CD4-positive, alpha-beta memory T cell (primary cell): ENCODE measurements at regions of chr1 and their contacts with region 1.

Region 1: GRCh38 chr1:101309334-101310311 is 72.8 kb downstream of the S1PR1 start:
- DNase-seq: peak; percentile 86 to 92 (median 89)
- H3K4me3 ChIP-seq: peak overlapping the region; percentile 9 to 55
- H3K4me3 Mint-ChIP-seq: peak overlapping the region; percentile 80 to 88 (median 86)
- H3K27ac ChIP-seq: peak overlapping the region; percentile 79
- H3K27ac Mint-ChIP-seq: peak overlapping the region; percentile 97 to 99 (median 98)
- H3K4me1 ChIP-seq: peaks cover 56% of the 10 kb centered on the region
- H3K4me1 Mint-ChIP-seq: peaks cover 50 to 78% (median 63%) of the 10 kb centered on the region in 4 donors
- H3K27me3 ChIP-seq: no peaks in the 10 kb centered on the region
- H3K27me3 Mint-ChIP-seq: no peaks in the 10 kb centered on the region

Region 2: GRCh38 chr1:100921109-100921706 is 388.4 kb before region 1 on chr1:
- CTCF ChIA-PET with region 1: interaction called, 10 read pairs
- POLR2A ChIA-PET with region 1: interaction called, 19 read pairs
- intact Hi-C with region 1: no loop called
- DNase-seq: peak in 4 of 5 donors; percentile 48 to 66 (median 60)
- H3K4me3 ChIP-seq: no peak overlapping the region
- H3K4me3 Mint-ChIP-seq: peak overlapping the region in 3 of 8 donors; percentile 24 to 67 (median 39)
- H3K27ac ChIP-seq: no peak overlapping the region
- H3K27ac Mint-ChIP-seq: peak overlapping the region; percentile 61 to 91 (median 82)
- H3K4me1 ChIP-seq: peaks cover 39% of the 10 kb centered on the region
- H3K4me1 Mint-ChIP-seq: peaks cover 25 to 61% (median 38%) of the 10 kb centered on the region in 4 donors
- H3K27me3 ChIP-seq: no peaks in the 10 kb centered on the region
- H3K27me3 Mint-ChIP-seq: no peaks in the 10 kb centered on the region

Region 3: DNA sequence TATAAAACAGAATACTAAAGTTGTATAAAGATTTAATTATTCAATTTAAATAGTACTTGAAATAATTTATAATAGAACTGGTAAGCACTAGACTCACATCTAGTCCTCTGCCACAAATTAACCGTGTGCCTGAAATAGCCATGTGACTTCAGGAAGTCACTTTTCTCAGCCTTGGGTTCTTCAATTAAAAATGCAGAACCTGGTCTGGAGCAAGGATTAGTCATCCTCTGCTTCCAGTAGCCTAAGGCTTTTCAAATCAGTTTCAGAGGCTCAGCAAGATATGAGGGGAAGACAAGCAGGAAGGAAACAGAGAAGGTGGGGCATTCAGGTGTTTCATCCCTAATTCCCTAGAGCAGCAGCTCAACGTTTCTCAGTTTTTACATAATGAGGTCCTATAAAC is 307.1 kb before region 1 on chr1:
- CTCF ChIA-PET with region 1: no interaction called
- POLR2A ChIA-PET with region 1: no interaction called
- intact Hi-C with region 1: no loop called
- DNase-seq: no peak
- H3K4me3 ChIP-seq: no peak overlapping the region
- H3K4me3 Mint-ChIP-seq: peak overlapping the region in 3 of 8 donors; percentile 10 to 71 (median 54)
- H3K27ac ChIP-seq: no peak overlapping the region
- H3K27ac Mint-ChIP-seq: peak overlapping the region; percentile 44 to 90 (median 76)
- H3K4me1 ChIP-seq: peaks cover 58% of the 10 kb centered on the region
- H3K4me1 Mint-ChIP-seq: peaks cover 46 to 64% (median 50%) of the 10 kb centered on the region in 4 donors
- H3K27me3 ChIP-seq: no peaks in the 10 kb centered on the region
- H3K27me3 Mint-ChIP-seq: no peaks in the 10 kb centered on the region

Region 4: GRCh38 chr1:101198842-101199636 is 110.6 kb before region 1 on chr1:
- CTCF ChIA-PET with region 1: no interaction called
- POLR2A ChIA-PET with region 1: no interaction called
- intact Hi-C with region 1: no loop called
- DNase-seq: no peak
- H3K4me3 ChIP-seq: no peak overlapping the region
- H3K4me3 Mint-ChIP-seq: no peak overlapping the region
- H3K27ac ChIP-seq: no peak overlapping the region
- H3K27ac Mint-ChIP-seq: no peak overlapping the region
- H3K4me1 ChIP-seq: no peaks in the 10 kb centered on the region
- H3K4me1 Mint-ChIP-seq: peaks cover 0 to 9% (median 6%) of the 10 kb centered on the region in 4 donors
- H3K27me3 ChIP-seq: no peaks in the 10 kb centered on the region
- H3K27me3 Mint-ChIP-seq: peaks cover 0 to 3% of the 10 kb centered on the region in 2 donors

Region 5: DNA sequence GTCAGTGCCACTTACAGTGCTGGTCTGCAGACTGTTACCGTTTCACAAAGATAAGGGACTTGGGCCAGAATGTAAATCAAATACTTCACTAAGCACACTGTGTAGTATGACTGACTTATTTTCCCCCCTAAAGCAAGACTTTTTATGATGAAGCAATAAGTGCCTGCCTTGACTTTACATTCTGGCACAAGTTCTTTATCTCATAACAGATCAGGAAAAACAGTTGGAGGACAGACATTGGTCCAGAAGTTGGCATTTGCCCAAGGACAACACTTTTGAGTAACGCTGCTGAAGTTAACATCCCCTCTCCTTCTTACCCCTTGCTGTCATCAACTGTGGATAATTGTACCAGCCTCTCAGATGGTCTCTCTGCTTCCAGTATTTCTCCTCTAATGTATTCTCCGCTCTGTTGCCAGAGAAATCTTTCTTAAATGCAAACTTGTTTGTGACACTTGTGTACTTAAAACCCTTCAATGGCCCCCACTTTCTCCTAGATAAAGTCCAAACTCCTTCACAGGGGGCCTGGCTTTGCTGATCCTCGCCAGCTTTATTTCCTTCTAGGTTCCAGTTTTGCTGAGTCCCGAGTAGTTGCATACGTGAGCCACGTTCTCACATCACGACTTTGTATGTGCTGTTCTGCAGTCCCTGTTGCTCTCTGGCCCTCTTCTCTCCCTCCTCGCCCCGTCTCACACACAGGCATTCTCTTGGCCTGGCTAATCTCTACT is 27.1 kb before region 1 on chr1:
- CTCF ChIA-PET with region 1: interaction called, 180 read pairs
- POLR2A ChIA-PET with region 1: interaction called, 21 read pairs
- intact Hi-C with region 1: no loop called
- DNase-seq: no peak
- H3K4me3 ChIP-seq: no peak overlapping the region
- H3K4me3 Mint-ChIP-seq: peak overlapping the region in 5 of 8 donors; percentile 8 to 80 (median 51)
- H3K27ac ChIP-seq: peak overlapping the region; percentile 66
- H3K27ac Mint-ChIP-seq: peak overlapping the region; percentile 89 to 98 (median 95)
- H3K4me1 ChIP-seq: peaks cover 99% of the 10 kb centered on the region
- H3K4me1 Mint-ChIP-seq: peaks cover 84 to 95% (median 90%) of the 10 kb centered on the region in 4 donors
- H3K27me3 ChIP-seq: no peaks in the 10 kb centered on the region
- H3K27me3 Mint-ChIP-seq: no peaks in the 10 kb centered on the region

Region 6: DNA sequence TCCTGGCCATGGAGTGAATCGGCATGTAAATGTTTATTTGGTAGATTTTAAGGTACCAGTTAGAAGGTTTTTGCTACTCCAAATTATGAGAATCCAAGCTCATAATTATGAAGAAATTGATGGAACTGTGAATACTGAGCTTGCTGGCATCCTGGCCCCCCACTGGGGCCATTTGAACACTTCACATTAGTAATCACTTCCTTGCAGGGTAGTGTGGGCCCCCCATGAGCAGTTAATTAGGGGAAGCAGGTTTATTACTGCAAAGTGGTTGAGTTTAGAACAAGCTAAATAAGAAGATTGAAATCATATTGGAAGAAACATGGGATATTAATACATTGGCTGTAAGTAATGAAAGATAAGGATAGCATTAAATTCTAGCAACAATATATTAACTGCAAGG is 13.9 kb after region 1 on chr1:
- CTCF ChIA-PET with region 1: interaction called, 26 read pairs
- POLR2A ChIA-PET with region 1: interaction called, 11 read pairs
- intact Hi-C with region 1: no loop called
- DNase-seq: no peak
- H3K4me3 ChIP-seq: no peak overlapping the region
- H3K4me3 Mint-ChIP-seq: no peak overlapping the region
- H3K27ac ChIP-seq: no peak overlapping the region
- H3K27ac Mint-ChIP-seq: no peak overlapping the region
- H3K4me1 ChIP-seq: no peaks in the 10 kb centered on the region
- H3K4me1 Mint-ChIP-seq: no peaks in the 10 kb centered on the region
- H3K27me3 ChIP-seq: no peaks in the 10 kb centered on the region
- H3K27me3 Mint-ChIP-seq: peaks cover 0 to 2% of the 10 kb centered on the region in 2 donors

Region 7: DNA sequence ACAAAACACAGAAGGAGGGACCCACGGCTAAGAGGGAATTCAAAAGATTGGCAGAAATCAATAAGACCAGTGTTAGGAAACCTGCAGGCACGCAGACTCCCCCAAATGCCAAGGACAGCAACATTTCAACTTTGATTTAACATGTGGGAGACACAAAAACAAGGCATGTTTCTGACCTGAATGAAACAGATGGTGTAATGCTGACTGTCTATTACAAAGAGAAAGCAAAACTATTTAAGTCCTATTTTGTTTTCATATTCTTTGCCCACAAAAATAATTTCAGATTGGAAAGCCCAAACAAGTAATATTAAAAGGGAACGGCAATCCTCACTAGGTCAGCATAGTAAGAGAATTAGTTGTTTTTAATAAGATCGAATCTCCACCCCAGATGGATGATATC is 35.1 kb after region 1 on chr1:
- CTCF ChIA-PET with region 1: interaction called, 56 read pairs
- POLR2A ChIA-PET with region 1: interaction called, 17 read pairs
- intact Hi-C with region 1: no loop called
- DNase-seq: no peak
- H3K4me3 ChIP-seq: no peak overlapping the region
- H3K4me3 Mint-ChIP-seq: peak overlapping the region in 6 of 8 donors; percentile 17 to 42 (median 30)
- H3K27ac ChIP-seq: no peak overlapping the region
- H3K27ac Mint-ChIP-seq: peak overlapping the region in 1 of 7 donors; percentile 68
- H3K4me1 ChIP-seq: peaks cover 24% of the 10 kb centered on the region
- H3K4me1 Mint-ChIP-seq: peaks cover 31 to 44% (median 36%) of the 10 kb centered on the region in 4 donors
- H3K27me3 ChIP-seq: no peaks in the 10 kb centered on the region
- H3K27me3 Mint-ChIP-seq: no peaks in the 10 kb centered on the region

Region 8: GRCh38 chr1:101438359-101438758 is 128.7 kb after region 1 on chr1:
- CTCF ChIA-PET with region 1: interaction called, 17 read pairs
- POLR2A ChIA-PET with region 1: no interaction called
- intact Hi-C with region 1: loop called (anchors 1 kb)
- DNase-seq: peak in 1 of 5 donors; percentile 7
- H3K4me3 ChIP-seq: no peak overlapping the region
- H3K4me3 Mint-ChIP-seq: no peak overlapping the region
- H3K27ac ChIP-seq: no peak overlapping the region
- H3K27ac Mint-ChIP-seq: no peak overlapping the region
- H3K4me1 ChIP-seq: no peaks in the 10 kb centered on the region
- H3K4me1 Mint-ChIP-seq: peaks cover 0 to 3% (median 0%) of the 10 kb centered on the region in 4 donors
- H3K27me3 ChIP-seq: no peaks in the 10 kb centered on the region
- H3K27me3 Mint-ChIP-seq: peaks cover 3 to 5% of the 10 kb centered on the region in 2 donors

Region 9: GRCh38 chr1:101567582-101568189 is 258.1 kb after region 1 on chr1:
- CTCF ChIA-PET with region 1: interaction called, 4 read pairs
- POLR2A ChIA-PET with region 1: interaction called, 3 read pairs
- intact Hi-C with region 1: loop called (anchors 1 kb)
- DNase-seq: peak; percentile 27 to 50 (median 41)
- H3K4me3 ChIP-seq: no peak overlapping the region
- H3K4me3 Mint-ChIP-seq: no peak overlapping the region
- H3K27ac ChIP-seq: no peak overlapping the region
- H3K27ac Mint-ChIP-seq: no peak overlapping the region
- H3K4me1 ChIP-seq: no peaks in the 10 kb centered on the region
- H3K4me1 Mint-ChIP-seq: no peaks in the 10 kb centered on the region
- H3K27me3 ChIP-seq: no peaks in the 10 kb centered on the region
- H3K27me3 Mint-ChIP-seq: peaks cover 15 to 16% of the 10 kb centered on the region in 2 donors